Right ventricle myocardium inferior (tissue), 1 donor: ENCODE measurements at regions of chr5 and their contacts with region 1.

Region 1: GRCh38 chr5:56460679-56461191 is 227.6 kb upstream of the ANKRD55 start:
- DNase-seq: no peak
- ATAC-seq: no peak

Region 2: DNA sequence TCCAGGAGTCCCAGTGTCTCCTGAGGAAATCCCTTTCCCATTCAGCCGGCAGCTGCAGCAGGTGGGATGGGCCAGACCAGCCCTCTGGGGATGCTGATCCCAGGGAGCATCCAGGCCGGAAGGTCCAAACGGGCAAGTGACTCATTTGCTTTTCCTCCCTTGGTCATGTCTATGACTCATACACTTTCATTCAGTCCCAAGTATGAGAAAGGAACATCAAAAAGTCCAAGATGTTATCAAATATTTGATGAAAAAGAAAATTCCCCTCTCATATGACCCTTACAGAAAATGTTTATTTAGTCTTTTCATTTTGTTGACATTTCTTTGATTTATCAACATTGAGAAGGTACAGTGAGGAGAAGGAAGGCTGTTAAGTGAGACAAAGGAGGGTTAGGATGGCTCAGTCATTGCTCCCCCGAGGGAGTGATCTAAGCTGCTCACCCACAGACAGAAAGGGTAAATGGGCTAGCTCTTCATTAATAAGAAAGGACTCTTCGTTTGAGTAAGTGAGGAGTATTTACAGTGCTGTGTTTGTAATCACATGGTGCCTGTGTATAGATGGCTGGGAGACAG is 110.1 kb before region 1 on chr5:
- intact Hi-C with region 1: loop called (anchors 10 kb)
- DNase-seq: peak; percentile 80
- ATAC-seq: peak; percentile 87

Region 3: GRCh38 chr5:56751572-56752313 is 291.0 kb after region 1 on chr5:
- intact Hi-C with region 1: no loop called
- DNase-seq: no peak
- ATAC-seq: no peak